GM13977 (cell line): ENCODE measurements at regions of chr4 and their contacts with region 1.

Region 1: GRCh38 chr4:83639849-83640493 is 104.1 kb downstream of the GPAT3 start:
- DNase-seq: peak; percentile 68
- CTCF ChIP-seq: peak; percentile 73

Region 2: DNA sequence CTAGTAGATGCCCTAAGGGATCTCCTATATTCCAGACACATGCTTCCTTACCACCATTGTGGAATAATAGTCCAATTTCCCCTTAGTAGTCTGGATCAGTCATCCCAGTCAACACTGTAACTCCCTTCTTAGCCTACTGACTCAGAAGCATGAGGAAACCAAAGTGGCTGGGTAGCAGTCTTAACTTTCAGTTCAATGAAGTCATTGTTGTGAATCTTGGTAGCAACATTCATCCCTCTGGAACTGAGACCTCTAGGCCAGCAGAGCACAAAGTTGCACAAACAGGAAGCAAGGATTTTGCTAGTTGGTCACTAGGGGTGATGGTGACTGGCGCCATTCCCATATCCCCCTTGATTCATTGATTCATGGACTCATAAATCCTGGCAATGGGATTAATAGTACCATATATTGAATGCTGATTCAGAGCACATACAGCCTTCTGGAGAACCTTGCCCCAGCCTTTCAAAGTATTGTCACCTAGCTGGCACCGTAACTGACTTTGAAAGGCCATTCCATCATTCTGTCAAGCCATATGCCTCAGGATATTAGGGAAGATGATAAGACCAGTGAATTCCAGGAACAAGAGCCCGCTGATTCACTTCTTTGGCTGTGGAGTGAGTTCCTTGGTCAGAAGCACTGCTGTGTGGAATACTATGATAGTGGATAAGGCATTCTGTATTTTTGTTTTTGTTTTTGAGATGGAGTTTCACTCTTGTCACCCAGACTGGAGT is 123.8 kb before region 1 on chr4:
- in situ Hi-C with region 1: loop called (anchors 10 kb)
- DNase-seq: no peak
- CTCF ChIP-seq: no peak